Endothelial cell of umbilical vein (primary cell): ENCODE measurements at regions of chr22 and their contacts with region 1.

Region 1: DNA sequence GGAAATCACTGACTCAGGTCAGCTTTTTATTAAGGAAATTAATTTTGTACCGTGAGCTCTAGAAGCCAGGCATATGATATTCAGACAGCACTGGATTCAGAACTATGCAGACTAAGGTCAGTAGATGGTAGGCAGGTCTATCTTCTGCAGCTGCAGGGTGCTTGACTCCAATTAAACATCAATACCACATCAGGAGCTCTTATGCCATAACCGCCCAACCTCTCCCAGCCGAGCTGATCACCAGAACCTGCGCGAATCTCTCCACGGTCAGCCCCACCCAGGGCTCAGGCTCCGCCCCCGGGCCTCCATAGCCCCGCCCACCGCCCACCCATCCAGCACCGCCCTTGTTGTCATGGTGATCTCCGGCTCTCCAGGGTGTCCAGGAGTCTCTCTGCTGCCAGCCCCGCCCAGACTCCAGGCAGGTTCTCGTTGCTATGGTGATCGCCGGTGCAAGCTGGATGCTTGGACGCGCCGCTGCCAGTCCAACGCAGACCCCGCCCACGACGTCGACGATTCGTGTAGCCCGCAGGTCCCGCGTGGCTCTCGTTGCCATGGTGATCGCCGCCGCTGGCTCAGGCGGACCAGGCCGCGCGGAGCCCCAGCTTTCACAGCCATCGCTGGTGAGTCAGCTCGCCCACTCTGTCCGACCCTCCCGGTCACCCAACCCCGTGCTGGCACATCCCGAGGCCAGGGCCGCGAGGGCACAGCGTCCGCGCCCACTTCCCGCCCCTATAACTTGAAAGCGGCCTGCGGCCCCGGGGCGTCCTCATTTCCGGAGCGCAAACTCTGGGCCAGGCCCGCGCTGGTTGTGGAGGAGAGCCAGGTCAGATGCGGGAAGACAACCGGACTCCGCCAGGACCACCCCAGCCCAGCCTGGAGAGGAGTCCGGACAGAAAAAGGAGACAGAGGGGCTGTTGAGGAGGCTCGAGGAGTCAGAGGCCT is at the start of gene RAB36:
- DNase-seq: peak; percentile 95
- H3K4me3 ChIP-seq: peak within 1 kb of the TSS; percentile 25 to 35 (median 26)
- H3K27ac ChIP-seq: peak within 1 kb of the TSS; percentile 26
- H3K4me1 ChIP-seq: peaks cover 9% of the 10 kb centered on the region
- H3K27me3 ChIP-seq: no peaks in the 10 kb centered on the region
- CTCF ChIP-seq: no peak
- POLR2A ChIP-seq: no peak
- total RNA-seq, gene RAB36: 2.6 and 2.7 TPM in 2 replicates

Region 2: DNA sequence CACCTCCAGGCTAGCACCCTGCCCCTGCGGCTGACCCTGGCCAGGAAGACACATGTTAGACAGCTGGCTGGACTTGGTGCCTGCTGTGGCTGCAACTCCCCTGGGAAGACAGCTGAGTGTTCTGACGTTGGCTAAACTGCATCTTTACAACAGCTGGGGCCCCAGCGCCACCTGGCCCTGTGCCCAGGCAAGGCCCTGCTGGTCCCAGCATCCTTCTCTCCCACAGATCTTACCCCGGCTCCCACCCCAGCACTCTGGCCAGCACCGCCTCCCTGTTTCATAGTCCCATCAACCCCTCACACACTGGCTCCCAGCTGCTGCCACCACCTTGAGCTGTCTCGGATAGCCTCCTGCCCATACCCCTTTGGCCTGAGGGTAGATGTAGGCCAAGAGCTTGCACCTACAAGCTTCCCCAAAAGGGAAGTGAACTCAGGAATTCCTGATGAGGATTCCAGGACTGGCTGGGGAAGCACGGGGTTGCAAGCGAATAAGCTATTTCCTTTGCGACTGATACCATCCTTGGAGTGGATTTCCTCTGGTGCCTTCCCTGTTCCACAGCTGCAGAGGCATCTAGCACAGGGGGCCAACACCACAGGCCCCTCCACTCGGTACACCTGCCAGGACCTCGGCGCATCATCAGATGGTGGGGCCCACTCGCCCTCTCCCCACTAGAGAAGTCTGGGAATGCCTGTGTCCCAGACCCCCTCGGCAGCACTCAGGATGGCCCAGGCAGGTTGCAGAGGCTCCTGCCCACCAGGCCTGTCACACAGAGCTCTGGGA is 31.9 kb before region 1 on chr22:
- CTCF ChIA-PET with region 1: no interaction called
- POLR2A ChIA-PET with region 1: no interaction called
- dilution Hi-C with region 1: no loop called
- intact Hi-C with region 1: no loop called
- DNase-seq: no peak
- H3K4me3 ChIP-seq: no peak overlapping the region
- H3K27ac ChIP-seq: no peak overlapping the region
- H3K4me1 ChIP-seq: no peaks in the 10 kb centered on the region
- H3K27me3 ChIP-seq: no peaks in the 10 kb centered on the region
- CTCF ChIP-seq: no peak
- POLR2A ChIP-seq: no peak

Region 3: DNA sequence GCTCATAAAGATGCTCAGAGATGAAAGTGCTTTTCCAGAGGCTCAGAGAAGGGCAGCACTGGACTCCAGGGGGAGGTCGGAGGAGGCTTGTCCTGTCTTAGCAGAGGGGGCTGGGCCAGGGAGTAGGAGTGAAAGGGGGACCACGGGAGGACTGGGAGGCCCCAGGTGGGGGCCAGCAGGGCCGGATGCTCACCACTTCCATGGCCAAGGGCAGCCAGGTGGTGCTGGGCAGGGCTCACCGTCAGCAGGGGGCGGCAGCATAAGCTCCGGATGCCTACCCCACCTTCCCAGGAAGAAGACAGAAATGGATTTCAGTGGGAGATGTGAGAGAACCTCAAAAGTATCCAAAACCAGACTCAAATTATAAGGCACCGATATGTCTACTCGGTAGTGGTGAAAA is 11.1 kb after region 1 on chr22:
- CTCF ChIA-PET with region 1: interaction called, 15 read pairs
- POLR2A ChIA-PET with region 1: no interaction called
- dilution Hi-C with region 1: no loop called
- intact Hi-C with region 1: no loop called
- DNase-seq: no peak
- H3K4me3 ChIP-seq: no peak overlapping the region
- H3K27ac ChIP-seq: no peak overlapping the region
- H3K4me1 ChIP-seq: no peaks in the 10 kb centered on the region
- H3K27me3 ChIP-seq: no peaks in the 10 kb centered on the region
- CTCF ChIP-seq: no peak
- POLR2A ChIP-seq: no peak

Region 4: DNA sequence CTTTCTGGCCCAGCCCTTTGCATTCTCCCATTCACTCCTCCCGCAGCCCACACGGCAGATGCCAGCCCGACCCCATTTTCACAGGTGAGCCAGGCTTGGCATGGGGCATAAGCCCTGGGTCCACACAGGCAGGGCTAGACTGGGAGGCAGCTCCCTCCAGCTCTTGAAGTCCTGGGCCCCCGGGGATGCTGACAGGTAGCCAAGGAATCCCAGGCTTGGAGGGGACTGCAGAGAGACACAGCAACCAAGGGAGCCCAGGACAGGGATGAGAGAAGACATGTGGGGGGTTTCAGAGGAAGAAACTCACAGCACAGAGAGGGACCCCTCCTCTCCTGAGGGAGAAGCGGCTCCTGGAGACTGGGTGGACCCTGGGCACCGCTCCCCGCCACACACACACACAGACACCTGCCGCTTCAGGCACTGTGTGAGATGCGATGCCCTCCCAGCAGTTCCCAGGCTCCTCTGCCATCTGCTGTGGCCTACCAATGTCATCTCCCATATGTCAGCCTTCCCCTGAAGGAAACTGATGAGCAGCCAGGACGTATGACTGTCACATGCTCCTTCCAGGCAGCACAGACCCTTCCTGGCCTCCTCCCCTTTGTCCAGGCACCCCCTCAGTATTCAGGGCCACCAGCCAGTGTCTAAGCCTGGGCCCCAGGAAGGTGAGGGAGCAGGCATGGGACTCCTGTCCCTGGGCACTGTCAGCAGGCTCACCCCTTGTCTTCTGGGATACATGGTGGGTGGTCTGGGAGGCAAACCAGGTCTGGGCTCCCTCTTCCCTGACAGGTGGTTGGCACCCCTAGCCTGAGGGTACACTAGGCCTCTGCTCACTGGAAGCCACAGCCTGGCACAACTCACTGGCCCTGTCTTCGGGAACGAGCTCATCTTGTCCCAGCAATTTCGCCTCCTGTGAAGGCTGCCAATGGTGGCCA is 23.2 kb after region 1 on chr22:
- CTCF ChIA-PET with region 1: no interaction called
- POLR2A ChIA-PET with region 1: no interaction called
- dilution Hi-C with region 1: no loop called
- intact Hi-C with region 1: no loop called
- DNase-seq: no peak
- H3K4me3 ChIP-seq: no peak overlapping the region
- H3K27ac ChIP-seq: no peak overlapping the region
- H3K4me1 ChIP-seq: no peaks in the 10 kb centered on the region
- H3K27me3 ChIP-seq: no peaks in the 10 kb centered on the region
- CTCF ChIP-seq: no peak
- POLR2A ChIP-seq: no peak